ENCODE measurements at regions of chr1 and their contacts with region 1.

Region 1: DNA sequence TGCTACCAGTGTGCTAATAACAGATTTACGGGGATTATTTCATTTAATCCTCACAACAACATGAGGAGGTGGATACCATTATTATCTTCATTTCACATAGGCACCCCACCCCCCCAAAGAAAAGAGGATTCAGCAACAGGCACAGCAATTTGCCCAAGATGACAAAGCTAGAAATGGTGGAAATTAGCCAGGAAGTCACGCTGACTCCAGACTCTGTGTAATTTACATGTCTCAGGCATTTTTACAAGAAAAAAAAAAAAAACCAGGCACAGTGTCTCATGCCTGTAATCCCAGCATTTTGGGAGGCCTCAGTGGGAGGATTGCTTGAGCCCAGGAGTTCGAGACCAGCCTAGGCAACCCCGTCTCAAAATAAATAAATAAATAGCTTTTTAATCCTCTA is 37.5 kb upstream of the PRDM2 start:
- DNase-seq: no peak
- ATAC-seq: no peak
- H3K4me3 ChIP-seq: no peak overlapping the region
- H3K4me3 Mint-ChIP-seq: no peak overlapping the region
- H3K27ac ChIP-seq: no peak overlapping the region
- H3K27ac Mint-ChIP-seq: no peak overlapping the region
- H3K4me1 ChIP-seq: no peaks in the 10 kb centered on the region
- H3K4me1 Mint-ChIP-seq: peaks cover 0 to 8% (median 0%) of the 10 kb centered on the region in 7 donors
- H3K27me3 ChIP-seq: no peaks in the 10 kb centered on the region
- H3K27me3 Mint-ChIP-seq: peaks cover 0 to 8% (median 0%) of the 10 kb centered on the region in 5 donors

Region 2: DNA sequence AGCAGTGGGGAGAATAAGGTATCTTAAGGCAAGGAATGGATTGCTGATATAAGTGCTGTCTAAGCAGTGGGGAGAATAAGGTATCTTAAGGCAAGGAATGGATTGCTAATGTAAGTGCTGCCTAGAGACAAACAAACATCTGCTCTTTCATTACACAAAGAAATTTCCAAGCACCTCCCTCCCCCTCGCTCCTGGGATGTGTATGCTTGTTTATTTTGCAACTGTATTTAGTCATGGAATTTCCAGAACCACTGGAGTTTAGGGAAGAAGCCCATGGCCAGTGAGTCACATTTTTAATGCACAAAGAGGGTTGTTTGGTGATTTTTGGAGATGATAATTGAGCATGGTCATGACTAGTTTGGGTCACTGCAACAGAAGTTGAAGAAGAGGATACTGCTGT is 57.3 kb before region 1 on chr1:
- CTCF ChIA-PET with region 1: no interaction called
- POLR2A ChIA-PET with region 1: no interaction called
- intact Hi-C with region 1: no loop called
- DNase-seq: no peak
- ATAC-seq: no peak
- H3K4me3 ChIP-seq: no peak overlapping the region
- H3K4me3 Mint-ChIP-seq: no peak overlapping the region
- H3K27ac ChIP-seq: no peak overlapping the region
- H3K27ac Mint-ChIP-seq: no peak overlapping the region
- H3K4me1 ChIP-seq: no peaks in the 10 kb centered on the region
- H3K4me1 Mint-ChIP-seq: no peaks in the 10 kb centered on the region
- H3K27me3 ChIP-seq: no peaks in the 10 kb centered on the region
- H3K27me3 Mint-ChIP-seq: peaks cover 0 to 21% (median 17%) of the 10 kb centered on the region in 5 donors

Region 3: DNA sequence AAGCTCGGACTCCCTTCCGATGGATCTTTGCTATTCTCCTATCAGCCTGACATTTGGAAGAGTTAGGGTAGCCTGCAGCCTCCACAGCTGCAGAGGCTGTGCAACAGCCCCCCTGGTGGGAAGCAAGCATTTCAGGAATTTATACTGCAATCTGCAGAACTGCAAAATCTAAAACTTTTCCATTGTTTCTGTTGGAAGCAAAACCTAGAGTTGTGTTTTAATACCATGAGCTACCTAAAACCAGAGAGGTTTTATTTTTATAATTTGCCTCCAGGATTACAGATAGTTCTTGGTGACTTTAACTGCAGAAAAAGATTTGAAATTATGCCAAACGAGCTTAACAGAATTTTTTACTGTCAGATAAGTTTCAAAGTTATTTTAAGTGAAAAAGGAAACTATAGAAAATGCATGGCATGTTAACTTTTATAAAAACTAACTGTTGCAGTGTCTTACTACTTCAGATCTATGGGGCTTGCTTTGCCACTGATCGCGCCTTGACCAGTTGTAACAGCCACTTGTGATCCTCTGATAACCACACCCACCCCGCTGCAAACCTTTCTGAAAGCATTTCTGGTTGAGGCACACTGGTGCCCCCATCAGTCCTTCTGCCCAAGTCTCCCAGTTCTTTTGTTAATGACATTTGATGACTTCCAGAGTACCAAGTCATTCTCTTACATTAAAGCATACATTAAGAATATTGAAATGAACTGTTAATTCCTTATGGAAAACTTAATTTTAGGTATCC is 102.3 kb after region 1 on chr1:
- CTCF ChIA-PET with region 1: no interaction called
- POLR2A ChIA-PET with region 1: no interaction called
- intact Hi-C with region 1: loop called in 1 of 2 experiments (anchors 2 kb)
- DNase-seq: peak in 1 of 9 donors; percentile 12
- ATAC-seq: peak; percentile 47
- H3K4me3 ChIP-seq: no peak overlapping the region
- H3K4me3 Mint-ChIP-seq: peak overlapping the region in 5 of 10 donors; percentile 2 to 41 (median 13)
- H3K27ac ChIP-seq: no peak overlapping the region
- H3K27ac Mint-ChIP-seq: peak overlapping the region in 6 of 9 donors; percentile 17 to 56 (median 40)
- H3K4me1 ChIP-seq: peaks cover 39 to 50% of the 10 kb centered on the region in 2 donors
- H3K4me1 Mint-ChIP-seq: peaks cover 50 to 89% (median 85%) of the 10 kb centered on the region in 7 donors
- H3K27me3 ChIP-seq: no peaks in the 10 kb centered on the region
- H3K27me3 Mint-ChIP-seq: no peaks in the 10 kb centered on the region

Region 4: GRCh38 chr1:13813398-13814012 is 151.0 kb after region 1 on chr1:
- CTCF ChIA-PET with region 1: interaction called, 6 read pairs
- POLR2A ChIA-PET with region 1: no interaction called
- intact Hi-C with region 1: loop called (anchors 1 kb)
- DNase-seq: peak; percentile 19 to 67 (median 32)
- ATAC-seq: peak; percentile 59
- H3K4me3 ChIP-seq: no peak overlapping the region
- H3K4me3 Mint-ChIP-seq: no peak overlapping the region
- H3K27ac ChIP-seq: no peak overlapping the region
- H3K27ac Mint-ChIP-seq: peak overlapping the region in 2 of 9 donors; percentile 53 to 60
- H3K4me1 ChIP-seq: no peaks in the 10 kb centered on the region
- H3K4me1 Mint-ChIP-seq: peaks cover 10 to 28% (median 13%) of the 10 kb centered on the region in 7 donors
- H3K27me3 ChIP-seq: no peaks in the 10 kb centered on the region
- H3K27me3 Mint-ChIP-seq: no peaks in the 10 kb centered on the region

Region 5: GRCh38 chr1:13825033-13825432 is 162.5 kb after region 1 on chr1:
- CTCF ChIA-PET with region 1: interaction called, 4 read pairs
- POLR2A ChIA-PET with region 1: no interaction called
- intact Hi-C with region 1: loop called in 1 of 2 experiments (anchors 1 kb)
- DNase-seq: peak in 1 of 9 donors; percentile 14
- ATAC-seq: no peak
- H3K4me3 ChIP-seq: no peak overlapping the region
- H3K4me3 Mint-ChIP-seq: no peak overlapping the region
- H3K27ac ChIP-seq: no peak overlapping the region
- H3K27ac Mint-ChIP-seq: no peak overlapping the region
- H3K4me1 ChIP-seq: peaks cover 0 to 2% of the 10 kb centered on the region in 2 donors
- H3K4me1 Mint-ChIP-seq: peaks cover 0 to 4% (median 0%) of the 10 kb centered on the region in 7 donors
- H3K27me3 ChIP-seq: no peaks in the 10 kb centered on the region
- H3K27me3 Mint-ChIP-seq: peaks cover 0 to 4% (median 3%) of the 10 kb centered on the region in 5 donors